ENCODE measurements at regions of chr1 and their contacts with region 1.

Region 1: DNA sequence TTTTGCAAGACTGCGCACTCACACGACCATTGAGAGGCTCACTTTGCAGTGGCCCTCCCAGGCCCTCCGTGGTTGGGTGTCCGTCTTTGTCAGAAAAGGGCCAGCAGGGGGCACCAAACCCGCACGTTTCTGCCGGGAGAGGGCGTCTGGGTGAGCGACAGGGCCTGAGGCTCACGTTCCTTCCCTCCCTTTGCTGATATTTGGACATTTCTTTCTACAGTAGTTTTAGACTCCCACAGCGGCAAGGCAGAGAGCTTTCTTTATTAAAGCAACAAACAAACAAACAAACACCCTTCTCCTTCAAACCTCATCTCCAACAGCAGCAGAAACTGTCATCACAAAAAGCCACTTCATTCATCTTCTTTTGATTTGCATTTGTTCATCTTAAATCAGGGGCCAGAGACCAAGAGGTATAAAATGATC is 79.2 kb upstream of the WDR26 start:
- DNase-seq: peak; percentile 25
- H3K4me3 ChIP-seq: no peak overlapping the region
- H3K27ac ChIP-seq: no peak overlapping the region
- H3K4me1 ChIP-seq: peaks cover 7 to 28% (median 20%) of the 10 kb centered on the region in 3 donors
- H3K27me3 ChIP-seq: no peaks in the 10 kb centered on the region
- CTCF ChIP-seq: peak; percentile 80 to 93 (median 86)
- POLR2A ChIP-seq: no peak

Region 2: DNA sequence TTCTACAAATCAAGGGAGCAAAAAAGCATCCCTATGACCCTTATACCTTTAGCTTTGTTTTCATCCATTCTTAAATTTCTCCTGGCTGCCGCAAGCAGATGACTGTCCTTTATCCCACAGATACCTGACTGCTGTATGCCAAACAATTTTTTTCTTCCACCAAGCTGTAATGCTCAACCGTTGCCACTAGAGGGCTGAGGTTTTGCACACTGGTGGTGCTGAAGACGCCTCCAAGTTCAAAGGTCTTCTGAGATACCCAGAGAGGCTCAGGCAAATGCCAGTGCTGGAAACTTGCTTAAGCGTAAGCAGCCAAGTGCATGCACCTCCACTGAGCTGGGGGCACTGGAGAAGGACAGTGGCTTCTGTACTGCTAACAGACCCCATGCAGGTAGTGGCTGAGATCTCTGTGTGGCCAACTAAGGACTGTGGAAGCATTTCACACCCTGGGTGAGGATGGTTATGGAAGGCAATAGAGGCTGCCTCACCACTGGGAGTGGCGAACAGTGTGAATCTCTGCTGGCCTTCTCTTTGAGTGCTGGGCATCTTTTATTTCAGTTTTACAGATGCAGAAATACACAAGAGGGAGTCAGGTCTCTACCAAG is 130.9 kb after region 1 on chr1:
- intact Hi-C with region 1: loop called (anchors 10 kb)
- DNase-seq: no peak
- H3K4me3 ChIP-seq: no peak overlapping the region
- H3K27ac ChIP-seq: no peak overlapping the region
- H3K4me1 ChIP-seq: no peaks in the 10 kb centered on the region
- H3K27me3 ChIP-seq: peaks cover 0 to 6% (median 0%) of the 10 kb centered on the region in 4 donors
- CTCF ChIP-seq: peak; percentile 55 to 87 (median 78)
- POLR2A ChIP-seq: no peak

Region 3: GRCh38 chr1:224736619-224737352 is 223.0 kb after region 1 on chr1:
- intact Hi-C with region 1: no loop called
- DNase-seq: no peak
- H3K4me3 ChIP-seq: no peak overlapping the region
- H3K27ac ChIP-seq: peak overlapping the region in 3 of 4 donors; percentile 3 to 63 (median 50)
- H3K4me1 ChIP-seq: peaks cover 15 to 39% (median 22%) of the 10 kb centered on the region in 3 donors
- H3K27me3 ChIP-seq: no peaks in the 10 kb centered on the region
- CTCF ChIP-seq: no peak
- POLR2A ChIP-seq: no peak

Region 4: DNA sequence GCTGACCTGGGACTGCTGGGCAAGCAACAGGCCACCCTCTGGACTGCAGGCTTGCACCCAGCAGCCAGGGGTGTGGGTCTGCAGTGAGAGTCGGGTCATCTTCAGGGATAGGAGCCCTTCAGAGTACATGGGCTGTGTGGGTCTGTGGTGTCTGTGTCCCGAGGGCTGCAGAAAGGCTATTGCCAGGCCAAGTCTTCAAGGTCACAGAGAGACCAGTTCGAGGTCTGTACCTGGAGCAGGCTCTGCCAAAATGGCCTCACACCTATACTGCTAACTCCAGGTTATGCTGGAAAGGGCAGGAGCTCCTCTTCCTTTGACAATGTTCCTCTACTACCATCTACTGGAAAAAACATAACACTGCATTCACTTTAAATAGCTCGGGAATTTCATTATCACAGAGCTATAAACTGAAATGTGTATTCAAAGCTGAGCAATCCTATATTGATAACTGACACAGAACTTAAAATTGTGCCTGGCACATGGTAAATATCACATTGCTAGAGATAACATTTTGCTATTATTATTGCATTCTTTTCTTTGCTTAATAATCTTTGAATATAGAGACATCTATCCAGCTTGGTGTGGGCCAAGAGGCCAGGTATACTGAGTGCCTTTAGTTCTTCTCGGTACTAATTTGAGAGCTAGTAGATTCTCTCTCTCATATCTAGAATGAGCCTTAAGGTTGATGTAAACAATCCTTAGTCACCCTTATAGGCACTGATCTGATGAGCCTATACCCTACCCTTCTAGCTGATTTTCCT is 408.8 kb after region 1 on chr1:
- intact Hi-C with region 1: loop called (anchors 5 kb)
- DNase-seq: no peak
- H3K4me3 ChIP-seq: no peak overlapping the region
- H3K27ac ChIP-seq: no peak overlapping the region
- H3K4me1 ChIP-seq: no peaks in the 10 kb centered on the region
- H3K27me3 ChIP-seq: no peaks in the 10 kb centered on the region
- CTCF ChIP-seq: peak in 5 of 6 experiments; percentile 43 to 75 (median 60)
- POLR2A ChIP-seq: no peak

Measured in esophagus squamous epithelium (tissue), 5 donors.